A673 (cell line): ENCODE measurements at regions of chr1 and their contacts with region 1.

Region 1: GRCh38 chr1:9867408-9868243 is 42.4 kb downstream of the CTNNBIP1 start:
- DNase-seq: peak; percentile 84
- H3K4me3 ChIP-seq: no peak overlapping the region
- H3K27ac ChIP-seq: no peak overlapping the region
- H3K4me1 ChIP-seq: no peaks in the 10 kb centered on the region
- H3K27me3 ChIP-seq: no peaks in the 10 kb centered on the region
- CTCF ChIP-seq: peak; percentile 99

Region 2: DNA sequence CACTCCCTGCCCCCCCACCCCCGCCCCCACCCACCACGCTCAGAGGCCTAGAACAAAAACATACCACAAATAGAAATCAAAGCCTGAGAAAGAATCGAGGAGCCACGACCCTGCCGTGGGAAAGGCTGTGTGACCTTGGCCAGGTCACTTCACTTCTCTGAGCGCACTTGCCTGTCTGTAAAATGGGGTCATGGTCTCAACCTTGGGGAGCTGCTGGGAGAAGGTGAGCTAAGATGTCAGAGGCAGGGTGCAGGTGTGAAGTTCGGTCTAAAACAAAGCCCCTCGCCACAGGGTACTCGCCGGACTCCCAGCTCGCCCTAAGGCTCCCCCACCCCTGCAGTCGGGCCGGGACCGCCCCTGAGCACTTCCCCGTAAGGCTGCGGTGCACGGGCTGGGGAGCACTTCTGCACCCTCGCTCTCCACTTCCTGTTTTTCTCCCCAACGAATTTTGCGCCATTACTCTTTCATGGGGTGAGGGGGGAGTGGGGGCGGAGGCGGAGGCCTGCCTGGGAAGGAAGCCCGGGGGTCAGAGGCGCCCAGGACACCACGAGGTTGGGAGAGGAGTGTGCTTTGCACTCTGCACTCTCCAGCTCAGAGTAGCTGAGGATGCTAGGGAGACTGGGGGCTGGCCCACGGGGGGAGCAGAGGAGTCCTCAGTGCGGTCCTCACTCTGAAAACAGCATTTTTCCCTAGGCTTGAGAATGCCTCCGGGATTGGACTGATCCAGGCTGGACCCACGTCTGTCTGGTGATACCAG is 238.0 kb before region 1 on chr1:
- CTCF ChIA-PET with region 1: interaction called, 3 read pairs
- POLR2A ChIA-PET with region 1: no interaction called
- intact Hi-C with region 1: loop called (anchors 1 kb)
- DNase-seq: no peak
- H3K4me3 ChIP-seq: no peak overlapping the region
- H3K27ac ChIP-seq: no peak overlapping the region
- H3K4me1 ChIP-seq: no peaks in the 10 kb centered on the region
- H3K27me3 ChIP-seq: no peaks in the 10 kb centered on the region
- CTCF ChIP-seq: no peak

Region 3: GRCh38 chr1:9721606-9722377 is 145.8 kb before region 1 on chr1:
- CTCF ChIA-PET with region 1: interaction called, 4 read pairs
- POLR2A ChIA-PET with region 1: no interaction called
- intact Hi-C with region 1: loop called (anchors 1 kb)
- DNase-seq: peak; percentile 62
- H3K4me3 ChIP-seq: no peak overlapping the region
- H3K27ac ChIP-seq: no peak overlapping the region
- H3K4me1 ChIP-seq: peaks cover 9% of the 10 kb centered on the region
- H3K27me3 ChIP-seq: no peaks in the 10 kb centered on the region
- CTCF ChIP-seq: peak; percentile 79

Region 4: GRCh38 chr1:9784508-9785133 is 83.0 kb before region 1 on chr1:
- CTCF ChIA-PET with region 1: interaction called, 5 read pairs
- POLR2A ChIA-PET with region 1: no interaction called
- intact Hi-C with region 1: loop called (anchors 1 kb)
- DNase-seq: peak; percentile 65
- H3K4me3 ChIP-seq: no peak overlapping the region
- H3K27ac ChIP-seq: no peak overlapping the region
- H3K4me1 ChIP-seq: peaks cover 8% of the 10 kb centered on the region
- H3K27me3 ChIP-seq: no peaks in the 10 kb centered on the region
- CTCF ChIP-seq: peak; percentile 71